ENCODE measurements at regions of chr10 and their contacts with region 1.

Region 1: GRCh38 chr10:84291384-84291783 is 37.0 kb upstream of the CCSER2 start:
- DNase-seq: peak; percentile 55
- H3K4me3 ChIP-seq: no peak overlapping the region
- H3K27ac ChIP-seq: no peak overlapping the region
- H3K4me1 ChIP-seq: peaks cover 7% of the 10 kb centered on the region
- H3K27me3 ChIP-seq: peaks cover 8 to 19% of the 10 kb centered on the region in 2 experiments
- CTCF ChIP-seq: no peak
- POLR2A ChIP-seq: no peak

Region 2: DNA sequence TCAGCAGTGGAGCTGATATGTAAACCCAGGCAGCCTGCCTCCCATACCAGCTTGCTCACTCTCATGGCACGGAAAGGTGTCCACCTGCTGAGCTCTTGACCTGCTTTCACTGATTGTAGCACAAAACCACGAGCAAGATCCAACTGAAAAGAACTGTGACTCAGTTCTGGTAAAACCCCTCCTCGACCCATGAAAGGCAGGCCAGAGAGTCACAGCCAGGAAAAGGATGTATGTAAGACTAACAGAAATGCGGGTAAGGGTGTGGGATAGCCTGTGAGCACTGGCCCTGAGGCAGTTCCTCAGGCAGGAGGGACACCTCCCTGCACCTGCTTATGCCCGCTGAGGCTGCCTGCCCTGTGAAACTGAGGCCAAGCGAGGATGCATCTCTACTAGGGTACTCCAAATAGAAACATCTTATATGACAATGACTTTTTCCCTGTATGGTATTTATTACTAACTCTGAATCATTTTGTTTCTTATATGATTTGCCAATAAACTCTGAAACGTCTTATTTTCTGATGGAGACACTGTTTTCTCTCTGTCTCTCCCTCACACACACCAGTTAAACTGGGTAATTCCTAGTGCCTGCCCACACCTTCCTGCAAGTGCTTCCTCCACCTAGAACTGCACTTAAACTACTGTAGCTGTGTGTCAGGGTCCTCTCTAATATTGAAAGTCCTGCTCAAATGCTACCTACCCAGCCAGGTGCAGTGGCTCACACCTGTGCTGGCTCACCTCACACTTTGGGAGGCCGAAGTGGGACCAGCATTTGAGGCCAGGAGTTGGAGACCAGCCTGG is 225.4 kb before region 1 on chr10:
- CTCF ChIA-PET with region 1: no interaction called
- POLR2A ChIA-PET with region 1: no interaction called
- dilution Hi-C with region 1: no loop called
- intact Hi-C with region 1: no loop called
- DNase-seq: no peak
- H3K4me3 ChIP-seq: no peak overlapping the region
- H3K27ac ChIP-seq: no peak overlapping the region
- H3K4me1 ChIP-seq: no peaks in the 10 kb centered on the region
- H3K27me3 ChIP-seq: no peaks in the 10 kb centered on the region
- CTCF ChIP-seq: no peak
- POLR2A ChIP-seq: no peak

Region 3: DNA sequence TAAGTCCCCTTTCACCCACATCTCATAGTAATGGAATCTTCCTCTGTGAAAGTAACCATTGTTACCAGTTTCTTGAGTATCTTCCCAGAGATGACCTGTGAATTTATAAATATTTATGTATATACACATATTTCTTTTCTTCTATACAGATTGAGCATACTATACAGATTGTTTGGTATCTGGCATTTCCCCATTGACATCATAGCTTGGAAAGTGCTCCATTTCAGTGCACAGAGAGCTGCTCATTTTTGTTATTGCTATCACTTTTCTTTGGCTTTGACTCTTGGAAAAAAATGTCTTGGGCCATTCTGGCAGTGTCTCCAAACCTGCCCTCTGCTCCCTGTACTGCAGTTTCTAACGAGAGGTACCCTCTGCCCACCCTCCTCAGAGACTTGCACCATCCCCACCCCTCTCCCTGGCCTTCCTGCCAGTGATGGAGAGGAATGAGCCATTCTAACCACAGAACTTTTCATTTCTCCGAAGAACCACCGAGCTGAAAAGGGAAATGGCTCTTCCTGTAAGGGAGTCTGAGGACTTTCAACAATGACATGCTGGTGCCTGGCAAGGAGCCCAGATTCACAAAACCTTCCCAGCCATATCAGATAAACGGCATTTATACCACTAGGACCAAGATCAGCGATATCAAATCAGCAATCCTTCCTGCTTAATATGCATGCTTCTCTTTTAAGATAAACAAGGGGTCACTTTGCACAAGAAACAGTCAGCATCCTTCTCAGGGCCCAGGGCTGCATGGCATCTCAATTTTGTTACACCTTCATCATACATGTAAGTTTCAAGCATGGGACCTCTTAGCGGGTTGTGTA is 17.3 kb after region 1 on chr10:
- CTCF ChIA-PET with region 1: interaction called, 7 read pairs
- POLR2A ChIA-PET with region 1: interaction called, 3 read pairs
- dilution Hi-C with region 1: no loop called
- intact Hi-C with region 1: loop called (anchors 1 kb)
- DNase-seq: peak; percentile 93
- H3K4me3 ChIP-seq: peak overlapping the region in 1 of 3 experiments; percentile 10
- H3K27ac ChIP-seq: peak overlapping the region; percentile 84
- H3K4me1 ChIP-seq: peaks cover 35% of the 10 kb centered on the region
- H3K27me3 ChIP-seq: no peaks in the 10 kb centered on the region
- CTCF ChIP-seq: no peak
- POLR2A ChIP-seq: no peak